ENCODE measurements at regions of chr18 and their contacts with region 1.

Region 1: GRCh38 chr18:23982155-23983079 is 32.1 kb upstream of the TTC39C start:
- DNase-seq: peak; percentile 87 to 92
- ATAC-seq: peak; percentile 86
- H3K4me3 ChIP-seq: no peak overlapping the region
- H3K27ac ChIP-seq: no peak overlapping the region
- H3K4me1 ChIP-seq: no peaks in the 10 kb centered on the region
- H3K27me3 ChIP-seq: no peaks in the 10 kb centered on the region

Region 2: GRCh38 chr18:23805898-23806297 is 176.5 kb before region 1 on chr18:
- intact Hi-C with region 1: no loop called
- DNase-seq: no peak
- ATAC-seq: no peak
- H3K4me3 ChIP-seq: no peak overlapping the region
- H3K27ac ChIP-seq: no peak overlapping the region
- H3K4me1 ChIP-seq: no peaks in the 10 kb centered on the region
- H3K27me3 ChIP-seq: no peaks in the 10 kb centered on the region

Region 3: GRCh38 chr18:23828426-23828825 is 154.0 kb before region 1 on chr18:
- intact Hi-C with region 1: no loop called
- DNase-seq: no peak
- ATAC-seq: no peak
- H3K4me3 ChIP-seq: no peak overlapping the region
- H3K27ac ChIP-seq: no peak overlapping the region
- H3K4me1 ChIP-seq: peaks cover 0 to 7% of the 10 kb centered on the region in 2 donors
- H3K27me3 ChIP-seq: no peaks in the 10 kb centered on the region

Region 4: GRCh38 chr18:23943104-23943503 is 39.3 kb before region 1 on chr18:
- intact Hi-C with region 1: loop called in 1 of 2 experiments (anchors 5 kb)
- DNase-seq: no peak
- ATAC-seq: no peak
- H3K4me3 ChIP-seq: no peak overlapping the region
- H3K27ac ChIP-seq: no peak overlapping the region
- H3K4me1 ChIP-seq: no peaks in the 10 kb centered on the region
- H3K27me3 ChIP-seq: no peaks in the 10 kb centered on the region

Region 5: GRCh38 chr18:24031916-24032315 is 49.5 kb after region 1 on chr18:
- intact Hi-C with region 1: no loop called
- DNase-seq: no peak
- ATAC-seq: no peak
- H3K4me3 ChIP-seq: no peak overlapping the region
- H3K27ac ChIP-seq: no peak overlapping the region
- H3K4me1 ChIP-seq: no peaks in the 10 kb centered on the region
- H3K27me3 ChIP-seq: no peaks in the 10 kb centered on the region

Region 6: DNA sequence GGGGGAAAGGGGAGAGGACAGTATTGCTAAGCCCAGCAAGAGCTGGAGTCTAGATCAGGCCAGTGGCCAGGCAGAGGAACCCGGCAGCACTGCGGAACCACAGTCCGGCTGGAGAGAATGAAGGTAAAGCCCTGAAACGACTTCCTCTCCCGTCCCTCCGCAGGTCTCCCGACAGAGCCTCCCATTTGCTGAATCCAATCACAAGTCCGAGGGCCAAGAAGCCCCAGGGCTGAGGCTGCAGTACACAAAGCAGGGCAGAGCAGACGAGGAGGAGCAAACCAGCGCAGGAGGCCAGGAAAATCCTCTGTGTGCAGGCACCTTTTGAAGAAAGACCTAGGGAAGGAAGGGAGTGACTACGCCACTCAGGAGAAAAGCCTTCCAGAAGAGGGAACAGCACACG is 310.8 kb after region 1 on chr18:
- intact Hi-C with region 1: no loop called
- DNase-seq: no peak
- ATAC-seq: peak; percentile 15
- H3K4me3 ChIP-seq: no peak overlapping the region
- H3K27ac ChIP-seq: no peak overlapping the region
- H3K4me1 ChIP-seq: no peaks in the 10 kb centered on the region
- H3K27me3 ChIP-seq: no peaks in the 10 kb centered on the region